ENCODE measurements at regions of chr12 and their contacts with region 1.

Region 1: DNA sequence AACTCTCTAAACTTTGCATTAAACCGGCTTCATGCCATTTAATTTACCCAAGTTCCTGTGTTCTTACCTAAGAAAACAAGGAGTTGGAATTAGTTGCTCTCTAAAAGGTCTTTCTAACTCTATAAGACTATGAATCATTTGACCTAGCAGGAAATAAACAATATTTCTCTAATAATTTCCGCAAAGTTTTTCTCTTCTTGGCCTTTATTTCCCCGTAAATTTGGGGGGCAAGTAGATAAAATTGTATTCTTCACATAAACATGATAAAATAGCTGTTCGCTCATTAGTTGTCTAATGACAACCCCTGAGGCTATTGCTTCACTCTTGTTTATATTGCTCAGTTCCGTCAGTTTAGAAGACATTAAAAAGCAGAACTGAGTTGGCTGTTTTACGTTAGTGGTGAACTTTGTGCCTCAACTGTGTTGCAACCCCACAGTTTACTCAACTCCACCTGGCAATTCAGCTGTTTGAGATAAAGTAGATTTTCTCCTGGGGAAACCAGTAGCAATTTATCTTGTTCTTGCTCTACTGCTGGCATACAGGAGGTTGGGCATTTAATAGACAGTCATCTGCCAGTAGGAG is 74.7 kb downstream of the BTG1 start:
- DNase-seq: no peak
- ATAC-seq: no peak
- H3K4me3 ChIP-seq: no peak overlapping the region
- H3K4me3 Mint-ChIP-seq: no peak overlapping the region
- H3K27ac ChIP-seq: no peak overlapping the region
- H3K27ac Mint-ChIP-seq: no peak overlapping the region
- H3K4me1 ChIP-seq: peaks cover 5% of the 10 kb centered on the region
- H3K4me1 Mint-ChIP-seq: peaks cover 28% of the 10 kb centered on the region
- H3K27me3 ChIP-seq: no peaks in the 10 kb centered on the region
- H3K27me3 Mint-ChIP-seq: no peaks in the 10 kb centered on the region
- CTCF ChIP-seq: no peak

Region 2: DNA sequence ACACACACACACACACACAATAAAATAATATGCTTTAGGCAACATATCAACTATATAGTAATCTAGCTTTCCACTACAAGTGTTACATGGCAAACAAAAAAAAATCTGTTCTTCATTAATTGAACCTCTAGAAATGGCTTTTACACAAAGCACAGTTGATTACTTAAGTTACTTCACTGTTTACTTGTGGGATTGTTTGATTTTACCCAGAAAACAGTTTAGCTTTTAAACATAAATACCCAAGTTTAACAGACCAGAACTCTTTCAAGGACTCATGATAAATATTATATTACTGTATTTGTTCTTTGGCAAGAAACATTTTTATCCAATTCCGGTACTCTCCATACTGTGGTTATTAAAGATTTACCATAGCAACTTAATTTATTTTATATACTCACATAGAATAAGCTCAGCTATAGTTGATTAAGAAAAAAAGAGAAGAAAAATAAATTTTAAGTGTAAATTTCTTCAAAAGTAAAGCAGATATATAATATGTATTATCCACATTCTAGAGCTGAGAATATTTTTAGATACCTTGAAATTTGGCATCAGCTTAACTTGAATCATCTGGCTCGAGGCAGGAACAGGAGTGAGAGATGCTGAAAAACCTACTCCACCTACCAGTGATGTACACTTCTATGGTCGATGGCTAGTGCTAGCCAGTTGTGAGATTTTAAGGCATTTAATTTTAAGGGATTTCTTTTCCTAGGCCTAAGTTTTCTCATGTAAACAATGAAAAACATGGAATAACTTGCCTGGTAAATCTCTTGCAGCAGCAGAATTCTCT is 51.3 kb before region 1 on chr12:
- CTCF ChIA-PET with region 1: no interaction called
- POLR2A ChIA-PET with region 1: no interaction called
- intact Hi-C with region 1: loop called in 1 of 2 experiments (anchors 1 kb)
- DNase-seq: no peak
- ATAC-seq: no peak
- H3K4me3 ChIP-seq: no peak overlapping the region
- H3K4me3 Mint-ChIP-seq: no peak overlapping the region
- H3K27ac ChIP-seq: no peak overlapping the region
- H3K27ac Mint-ChIP-seq: no peak overlapping the region
- H3K4me1 ChIP-seq: peaks cover 25% of the 10 kb centered on the region
- H3K4me1 Mint-ChIP-seq: peaks cover 27% of the 10 kb centered on the region
- H3K27me3 ChIP-seq: no peaks in the 10 kb centered on the region
- H3K27me3 Mint-ChIP-seq: no peaks in the 10 kb centered on the region
- CTCF ChIP-seq: no peak

Region 3: GRCh38 chr12:92114834-92115233 is 43.9 kb after region 1 on chr12:
- CTCF ChIA-PET with region 1: no interaction called
- POLR2A ChIA-PET with region 1: no interaction called
- intact Hi-C with region 1: no loop called
- DNase-seq: no peak
- ATAC-seq: no peak
- H3K4me3 ChIP-seq: no peak overlapping the region
- H3K4me3 Mint-ChIP-seq: peak overlapping the region; percentile 56
- H3K27ac ChIP-seq: no peak overlapping the region
- H3K27ac Mint-ChIP-seq: no peak overlapping the region
- H3K4me1 ChIP-seq: peaks cover 43% of the 10 kb centered on the region
- H3K4me1 Mint-ChIP-seq: peaks cover 59% of the 10 kb centered on the region
- H3K27me3 ChIP-seq: no peaks in the 10 kb centered on the region
- H3K27me3 Mint-ChIP-seq: no peaks in the 10 kb centered on the region
- CTCF ChIP-seq: no peak